Pancreas (tissue), 10 donors: ENCODE measurements at regions of chr13 and their contacts with region 1.

Region 1: GRCh38 chr13:35984776-35985453 is 146.3 kb downstream of the DCLK1 start:
- DNase-seq: no peak
- ATAC-seq: no peak
- H3K4me3 ChIP-seq: no peak overlapping the region
- H3K27ac ChIP-seq: no peak overlapping the region
- H3K4me1 ChIP-seq: no peaks in the 10 kb centered on the region
- H3K27me3 ChIP-seq: no peaks in the 10 kb centered on the region
- CTCF ChIP-seq: no peak

Region 2: GRCh38 chr13:36275190-36276002 is 290.5 kb after region 1 on chr13:
- intact Hi-C with region 1: loop called (anchors 5 to 10 kb)
- DNase-seq: peak in 2 of 6 donors; percentile 23 to 28
- ATAC-seq: peak in 3 of 4 donors; percentile 72 to 78 (median 75)
- H3K4me3 ChIP-seq: no peak overlapping the region
- H3K27ac ChIP-seq: no peak overlapping the region
- H3K4me1 ChIP-seq: no peaks in the 10 kb centered on the region
- H3K27me3 ChIP-seq: no peaks in the 10 kb centered on the region
- CTCF ChIP-seq: peak in 3 of 4 donors; percentile 24 to 46 (median 43)

Region 3: DNA sequence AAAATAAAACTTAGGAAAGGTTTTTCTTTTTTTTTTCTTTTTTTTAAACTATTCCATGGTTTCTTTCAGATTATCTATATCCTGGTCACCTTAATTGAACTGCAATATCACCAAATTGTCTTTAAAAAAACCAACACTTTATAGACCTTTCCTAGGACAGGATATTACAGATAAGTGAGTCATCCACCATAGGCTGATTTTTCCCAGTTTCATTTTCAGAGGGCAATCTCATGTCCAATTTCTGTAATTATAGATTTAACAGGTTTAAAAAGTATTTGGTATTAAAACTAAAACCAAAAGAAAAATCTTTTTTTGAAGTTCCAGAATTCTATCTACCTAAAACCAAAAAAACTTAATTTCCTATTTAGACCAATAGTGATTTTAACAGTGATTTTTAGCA is 348.1 kb after region 1 on chr13:
- intact Hi-C with region 1: no loop called
- DNase-seq: no peak
- ATAC-seq: no peak
- H3K4me3 ChIP-seq: no peak overlapping the region
- H3K27ac ChIP-seq: no peak overlapping the region
- H3K4me1 ChIP-seq: peaks cover 0 to 2% (median 0%) of the 10 kb centered on the region in 3 donors
- H3K27me3 ChIP-seq: no peaks in the 10 kb centered on the region
- CTCF ChIP-seq: no peak